GM10248 (cell line): ENCODE measurements at regions of chr1 and their contacts with region 1.

Region 1: GRCh38 chr1:245666412-245666811 is 511.6 kb downstream of the KIF26B start:
- DNase-seq: no peak
- CTCF ChIP-seq: no peak

Region 2: DNA sequence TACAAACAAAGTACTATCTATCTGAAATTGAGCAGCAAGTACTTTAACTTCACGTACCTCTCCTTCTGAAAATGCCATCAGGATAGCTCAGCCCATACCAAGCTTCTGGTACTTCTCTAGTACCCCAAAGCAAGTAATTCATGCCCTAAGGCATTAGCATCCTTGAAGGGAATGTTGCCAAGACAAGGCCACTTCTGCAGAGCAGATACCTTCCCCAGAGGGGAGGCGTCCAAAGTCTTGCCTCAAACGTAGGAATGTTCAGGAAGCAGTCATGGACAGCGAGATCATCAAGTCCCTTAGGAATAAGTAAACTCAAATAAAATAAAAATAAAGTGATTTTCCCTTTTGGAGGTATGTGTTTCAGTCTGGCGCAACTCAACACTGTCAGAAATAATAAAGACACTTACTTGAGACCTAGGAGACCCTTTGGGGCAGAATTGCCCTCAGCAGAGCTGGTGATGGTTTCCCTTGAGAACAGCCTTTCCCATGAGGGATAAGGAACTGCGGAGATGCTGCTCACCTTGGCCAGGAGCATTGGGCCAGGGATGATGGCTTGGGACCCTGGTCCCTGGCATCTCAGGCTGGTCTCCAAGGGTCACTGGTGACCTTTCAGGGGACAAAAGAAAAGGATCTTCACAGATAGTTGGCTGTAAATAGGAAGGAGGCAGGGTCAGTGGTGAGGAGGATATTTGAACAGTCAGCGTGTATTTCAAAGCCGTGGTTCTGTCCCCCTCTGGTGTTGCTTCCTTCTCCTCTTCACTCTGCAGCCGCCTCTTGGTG is 11.2 kb after region 1 on chr1:
- CTCF ChIA-PET with region 1: interaction called, 10 read pairs
- POLR2A ChIA-PET with region 1: no interaction called
- DNase-seq: no peak
- CTCF ChIP-seq: no peak

Region 3: GRCh38 chr1:245807306-245807705 is 140.9 kb after region 1 on chr1:
- CTCF ChIA-PET with region 1: no interaction called
- POLR2A ChIA-PET with region 1: no interaction called
- DNase-seq: peak; percentile 75
- CTCF ChIP-seq: no peak